Endothelial cell of umbilical vein (primary cell): ENCODE measurements at regions of chr1 and their contacts with region 1.

Region 1: GRCh38 chr1:154607609-154608396 is at the start of gene ADAR:
- DNase-seq: peak; percentile 94
- H3K4me3 ChIP-seq: peak within 1 kb of the TSS; percentile 15 to 68 (median 47)
- H3K27ac ChIP-seq: peak within 1 kb of the TSS; percentile 56
- H3K4me1 ChIP-seq: peaks cover 6% of the 10 kb centered on the region
- H3K27me3 ChIP-seq: no peaks in the 10 kb centered on the region
- CTCF ChIP-seq: no peak
- POLR2A ChIP-seq: no peak
- total RNA-seq, gene ADAR: 128 and 141 TPM in 2 replicates

Region 2: DNA sequence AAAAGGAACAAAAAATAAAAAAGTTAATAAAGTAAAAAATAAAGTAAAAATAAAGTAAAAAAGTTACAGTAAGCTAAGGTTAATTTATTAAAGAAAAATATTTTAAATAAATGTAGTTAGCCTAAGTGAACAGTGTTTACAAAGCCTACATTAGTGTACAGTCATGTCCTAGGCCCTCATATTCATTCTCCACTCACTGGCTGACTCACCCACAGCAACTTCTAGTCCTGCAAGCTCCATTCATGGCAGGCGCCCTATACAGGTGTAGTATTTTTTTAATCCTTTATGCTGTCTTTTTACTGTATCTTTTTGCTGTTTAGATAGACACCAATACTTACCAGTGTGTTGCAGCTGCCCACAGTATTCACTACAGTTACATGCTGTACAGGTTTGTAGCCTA is 12.2 kb before region 1 on chr1:
- CTCF ChIA-PET with region 1: interaction called, 3 read pairs
- POLR2A ChIA-PET with region 1: interaction called, 11 read pairs
- dilution Hi-C with region 1: no loop called
- intact Hi-C with region 1: no loop called
- DNase-seq: no peak
- H3K4me3 ChIP-seq: no peak overlapping the region
- H3K27ac ChIP-seq: no peak overlapping the region
- H3K4me1 ChIP-seq: peaks cover 3% of the 10 kb centered on the region
- H3K27me3 ChIP-seq: no peaks in the 10 kb centered on the region
- CTCF ChIP-seq: no peak
- POLR2A ChIP-seq: no peak

Region 3: DNA sequence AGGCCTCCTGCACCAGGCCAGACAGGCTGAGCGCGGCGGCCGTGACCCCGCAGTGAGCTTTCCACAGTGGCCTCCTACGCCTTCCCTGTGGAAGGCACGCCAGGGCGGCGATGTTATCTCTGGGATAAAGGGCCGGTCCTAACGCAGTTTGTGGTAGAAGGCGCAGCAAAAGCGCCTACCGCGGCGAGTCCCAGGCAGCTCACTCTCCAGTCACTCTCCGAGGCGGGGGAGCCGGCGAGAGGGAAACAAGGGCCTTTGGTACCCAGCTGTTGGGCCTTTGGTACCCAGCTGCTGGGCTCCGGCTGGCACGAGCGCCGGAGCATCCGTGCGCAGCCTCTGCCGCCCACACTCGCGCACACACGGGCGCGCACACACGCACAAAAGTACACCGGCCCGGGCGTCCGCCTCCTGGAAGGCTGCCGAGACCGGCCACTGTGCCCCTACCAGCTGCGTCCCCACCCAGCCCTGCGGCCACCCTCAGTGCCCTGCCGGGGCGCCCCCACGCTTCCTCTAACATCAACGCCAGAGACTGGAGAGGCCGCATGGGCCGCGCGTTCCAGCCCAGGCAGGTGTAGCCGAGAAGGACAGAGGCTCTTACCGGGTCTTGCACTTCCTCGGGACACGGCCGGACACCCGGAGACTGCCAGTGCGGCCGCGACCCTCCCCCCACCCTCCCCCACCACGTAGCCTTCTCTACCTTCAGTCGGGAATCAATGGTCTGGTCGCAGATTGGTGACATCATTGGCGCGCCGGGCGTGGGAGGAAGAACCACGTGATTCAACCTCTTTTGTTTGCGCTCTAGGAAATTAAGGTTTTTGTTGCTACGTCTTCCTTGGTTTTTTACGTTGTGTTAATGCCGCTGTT is 19.7 kb after region 1 on chr1:
- CTCF ChIA-PET with region 1: interaction called, 4 read pairs
- POLR2A ChIA-PET with region 1: interaction called, 3 read pairs
- dilution Hi-C with region 1: no loop called
- intact Hi-C with region 1: loop called (anchors 2 kb)
- DNase-seq: peak; percentile 89
- H3K4me3 ChIP-seq: peak overlapping the region; percentile 72 to 99 (median 73)
- H3K27ac ChIP-seq: peak overlapping the region; percentile 86
- H3K4me1 ChIP-seq: peaks cover 7% of the 10 kb centered on the region
- H3K27me3 ChIP-seq: peaks cover 3 to 13% of the 10 kb centered on the region in 2 experiments
- CTCF ChIP-seq: no peak
- POLR2A ChIP-seq: no peak